WTC11 (cell line): ENCODE measurements at regions of chr11 and their contacts with region 1.

Region 1: DNA sequence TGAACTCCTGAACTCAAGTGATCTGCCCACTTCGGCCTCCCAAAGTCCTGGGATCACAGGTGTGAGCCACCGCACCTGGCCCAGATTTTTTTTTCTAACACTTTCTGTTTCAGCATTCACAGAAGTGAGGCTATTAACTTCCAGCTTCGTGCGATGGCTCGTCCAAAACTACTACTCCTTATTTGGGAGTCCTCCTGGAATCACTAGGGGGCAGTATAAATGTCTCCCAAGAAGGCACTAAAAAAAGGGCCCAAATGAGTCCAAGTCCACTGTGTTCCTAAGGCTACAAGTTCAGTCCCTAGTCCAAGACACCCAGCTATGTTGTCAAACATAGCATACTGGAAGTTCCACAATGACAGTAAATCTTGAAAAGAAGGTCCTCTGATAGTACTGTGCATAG is 63.2 kb upstream of the BIRC3 start:
- DNase-seq: peak; percentile 21
- ATAC-seq: peak; percentile 76
- H3K4me3 Mint-ChIP-seq: no peak overlapping the region
- H3K27ac Mint-ChIP-seq: no peak overlapping the region
- H3K4me1 Mint-ChIP-seq: peaks cover 14% of the 10 kb centered on the region
- H3K27me3 Mint-ChIP-seq: no peaks in the 10 kb centered on the region
- CTCF ChIP-seq: peak; percentile 45; the same call in 1 of the 2 replicates

Region 2: DNA sequence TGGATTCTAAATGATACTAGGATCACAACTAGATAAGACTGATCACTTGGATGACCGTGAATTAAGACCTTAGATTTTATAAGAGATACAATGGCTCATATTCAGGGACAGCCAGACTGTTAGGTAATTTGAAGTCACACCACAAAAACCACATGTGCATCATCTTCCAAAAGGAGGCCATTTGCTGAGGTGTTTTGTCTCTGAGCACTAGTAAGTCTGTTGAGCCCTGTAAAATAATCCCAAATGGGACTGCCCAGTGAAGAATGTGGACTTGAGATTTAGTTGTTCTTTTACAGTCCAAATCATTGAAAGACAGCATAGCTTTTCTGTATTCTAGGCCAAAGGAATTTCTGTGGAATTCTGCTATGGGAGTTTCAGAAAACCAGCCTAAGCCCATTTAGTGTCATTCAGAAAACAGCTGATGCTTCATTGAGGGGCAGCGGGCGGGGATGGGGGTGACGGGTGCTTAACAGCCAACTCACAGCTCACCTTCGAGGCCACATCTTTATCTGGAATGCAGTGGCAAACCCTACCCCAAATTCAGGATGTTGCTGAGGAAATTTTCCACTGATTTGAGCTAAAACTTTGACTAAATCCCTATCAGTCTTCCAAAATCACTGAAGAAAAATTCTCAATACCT is 16.8 kb before region 1 on chr11:
- CTCF ChIA-PET with region 1: interaction called, 24 read pairs
- POLR2A ChIA-PET with region 1: interaction called, 7 read pairs
- DNase-seq: no peak
- ATAC-seq: no peak
- H3K4me3 Mint-ChIP-seq: no peak overlapping the region
- H3K27ac Mint-ChIP-seq: no peak overlapping the region
- H3K4me1 Mint-ChIP-seq: peaks cover 34% of the 10 kb centered on the region
- H3K27me3 Mint-ChIP-seq: no peaks in the 10 kb centered on the region
- CTCF ChIP-seq: no peak

Region 3: DNA sequence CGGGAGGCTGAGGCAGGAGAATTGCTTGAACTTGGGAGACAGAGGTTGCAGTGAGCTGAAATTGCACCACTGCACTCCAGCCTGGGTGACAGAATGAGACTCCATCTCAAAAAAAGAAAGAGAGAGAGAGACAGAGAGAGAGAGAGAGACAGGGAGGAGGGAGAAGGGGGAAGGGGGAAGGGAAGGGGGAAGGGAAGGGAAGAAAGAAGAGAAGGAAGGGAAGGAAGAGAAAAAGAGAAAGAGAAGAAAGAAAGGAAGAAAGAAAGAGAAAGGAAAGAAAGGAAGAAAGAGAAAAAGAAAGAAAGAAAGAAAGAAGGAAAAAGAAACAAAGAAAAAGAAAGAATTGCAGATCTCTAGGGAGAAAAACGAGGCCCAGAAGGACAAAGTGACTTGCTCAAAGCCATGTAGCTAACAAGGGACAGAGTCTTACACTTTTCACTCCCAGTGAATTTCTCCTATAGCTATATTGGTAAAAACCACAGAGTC is 10.6 kb before region 1 on chr11:
- CTCF ChIA-PET with region 1: interaction called, 15 read pairs
- POLR2A ChIA-PET with region 1: no interaction called
- DNase-seq: no peak
- ATAC-seq: no peak
- H3K4me3 Mint-ChIP-seq: no peak overlapping the region
- H3K27ac Mint-ChIP-seq: no peak overlapping the region
- H3K4me1 Mint-ChIP-seq: peaks cover 14% of the 10 kb centered on the region
- H3K27me3 Mint-ChIP-seq: no peaks in the 10 kb centered on the region
- CTCF ChIP-seq: no peak